ENCODE measurements at regions of chr7 and their contacts with region 1.

Region 1: GRCh38 chr7:125061776-125062397 is 132.3 kb upstream of the POT1 start:
- DNase-seq: peak; percentile 80
- H3K4me3 ChIP-seq: no peak overlapping the region
- H3K27ac ChIP-seq: no peak overlapping the region
- H3K4me1 ChIP-seq: peaks cover 7% of the 10 kb centered on the region
- H3K27me3 ChIP-seq: no peaks in the 10 kb centered on the region
- CTCF ChIP-seq: no peak

Region 2: GRCh38 chr7:124918662-124919061 is 143.2 kb before region 1 on chr7:
- CTCF ChIA-PET with region 1: no interaction called
- dilution Hi-C with region 1: no loop called
- in situ Hi-C with region 1: no loop called
- intact Hi-C with region 1: no loop called
- DNase-seq: no peak
- H3K4me3 ChIP-seq: no peak overlapping the region
- H3K27ac ChIP-seq: no peak overlapping the region
- H3K4me1 ChIP-seq: no peaks in the 10 kb centered on the region
- H3K27me3 ChIP-seq: no peaks in the 10 kb centered on the region
- CTCF ChIP-seq: no peak

Region 3: GRCh38 chr7:125084196-125084595 is 22.3 kb after region 1 on chr7:
- CTCF ChIA-PET with region 1: no interaction called
- dilution Hi-C with region 1: no loop called
- in situ Hi-C with region 1: no loop called
- intact Hi-C with region 1: no loop called
- DNase-seq: no peak
- H3K4me3 ChIP-seq: no peak overlapping the region
- H3K27ac ChIP-seq: no peak overlapping the region
- H3K4me1 ChIP-seq: peaks cover 6% of the 10 kb centered on the region
- H3K27me3 ChIP-seq: no peaks in the 10 kb centered on the region
- CTCF ChIP-seq: no peak

Region 4: GRCh38 chr7:125136755-125137547 is 75.1 kb after region 1 on chr7:
- CTCF ChIA-PET with region 1: no interaction called
- dilution Hi-C with region 1: no loop called
- in situ Hi-C with region 1: no loop called
- intact Hi-C with region 1: loop called (anchors 10 kb)
- DNase-seq: peak; percentile 96
- H3K4me3 ChIP-seq: peak overlapping the region in 2 of 3 experiments; percentile 27 to 31
- H3K27ac ChIP-seq: peak overlapping the region; percentile 96
- H3K4me1 ChIP-seq: peaks cover 23% of the 10 kb centered on the region
- H3K27me3 ChIP-seq: no peaks in the 10 kb centered on the region
- CTCF ChIP-seq: no peak

Region 5: DNA sequence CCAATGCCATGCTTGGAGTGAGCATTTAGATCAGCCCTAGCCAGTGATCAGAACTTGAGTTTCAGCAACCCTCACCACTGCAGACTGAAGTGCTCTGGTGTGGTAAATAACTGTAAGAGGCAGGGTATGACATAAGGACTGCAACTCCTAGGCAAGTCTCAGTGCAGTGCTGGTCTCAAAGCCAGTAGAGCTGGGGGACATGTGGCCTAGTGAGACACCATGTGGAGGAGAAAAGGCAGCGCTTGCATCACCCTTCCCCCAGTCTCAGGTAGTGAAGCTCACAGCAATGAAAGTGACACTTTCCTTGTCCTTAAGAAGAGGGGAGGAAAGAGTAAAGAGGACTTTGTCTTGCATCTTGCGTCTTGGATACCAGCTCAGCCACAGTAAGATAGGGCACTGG is 254.6 kb after region 1 on chr7:
- CTCF ChIA-PET with region 1: interaction called, 7 read pairs
- dilution Hi-C with region 1: no loop called
- in situ Hi-C with region 1: loop called (anchors 10 to 25 kb)
- intact Hi-C with region 1: loop called (anchors 1 kb)
- DNase-seq: peak; percentile 65
- H3K4me3 ChIP-seq: no peak overlapping the region
- H3K27ac ChIP-seq: no peak overlapping the region
- H3K4me1 ChIP-seq: no peaks in the 10 kb centered on the region
- H3K27me3 ChIP-seq: no peaks in the 10 kb centered on the region
- CTCF ChIP-seq: peak; percentile 51 to 85

Region 6: GRCh38 chr7:125326666-125327255 is 264.9 kb after region 1 on chr7:
- CTCF ChIA-PET with region 1: no interaction called
- dilution Hi-C with region 1: no loop called
- in situ Hi-C with region 1: loop called (anchors 10 to 25 kb)
- intact Hi-C with region 1: no loop called
- DNase-seq: peak; percentile 33
- H3K4me3 ChIP-seq: no peak overlapping the region
- H3K27ac ChIP-seq: no peak overlapping the region
- H3K4me1 ChIP-seq: no peaks in the 10 kb centered on the region
- H3K27me3 ChIP-seq: no peaks in the 10 kb centered on the region
- CTCF ChIP-seq: no peak

Region 7: DNA sequence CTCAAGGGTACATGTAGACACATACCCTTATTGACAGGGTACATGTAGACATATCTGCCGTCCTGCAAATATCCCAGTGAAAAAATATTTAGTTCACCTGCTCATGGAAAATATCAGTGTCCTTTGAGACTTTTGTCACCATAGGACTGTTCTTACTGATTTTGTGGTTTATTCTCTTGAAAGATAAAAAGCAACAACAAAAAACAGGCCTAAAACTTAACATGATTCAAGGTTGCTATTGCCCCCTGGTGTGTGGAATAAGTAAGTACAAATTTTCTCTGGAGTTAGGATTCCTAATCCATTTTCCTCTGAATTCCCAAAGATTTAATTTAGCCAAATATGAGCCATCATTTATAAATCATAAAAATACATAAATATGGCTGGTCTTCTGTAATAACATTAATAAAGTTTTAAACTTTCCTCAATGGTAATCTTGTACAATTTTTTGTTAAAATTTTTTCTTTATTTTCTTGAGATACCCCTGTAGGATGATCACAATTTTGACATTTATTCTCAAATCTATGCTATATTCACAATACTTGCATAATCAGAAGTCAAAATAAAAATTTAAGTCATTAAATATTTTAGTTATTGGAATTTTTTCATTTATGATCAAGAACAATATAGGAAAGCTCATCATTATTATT is 609.2 kb after region 1 on chr7:
- CTCF ChIA-PET with region 1: no interaction called
- dilution Hi-C with region 1: no loop called
- in situ Hi-C with region 1: loop called (anchors 25 kb)
- intact Hi-C with region 1: loop called (anchors 1 kb)
- DNase-seq: peak; percentile 3
- H3K4me3 ChIP-seq: no peak overlapping the region
- H3K27ac ChIP-seq: no peak overlapping the region
- H3K4me1 ChIP-seq: no peaks in the 10 kb centered on the region
- H3K27me3 ChIP-seq: no peaks in the 10 kb centered on the region
- CTCF ChIP-seq: peak; percentile 61 to 70

Measured in mammary epithelial cell (primary cell).